CD8-positive, alpha-beta T cell (primary cell): ENCODE measurements at regions of chr5 and their contacts with region 1.

Region 1: DNA sequence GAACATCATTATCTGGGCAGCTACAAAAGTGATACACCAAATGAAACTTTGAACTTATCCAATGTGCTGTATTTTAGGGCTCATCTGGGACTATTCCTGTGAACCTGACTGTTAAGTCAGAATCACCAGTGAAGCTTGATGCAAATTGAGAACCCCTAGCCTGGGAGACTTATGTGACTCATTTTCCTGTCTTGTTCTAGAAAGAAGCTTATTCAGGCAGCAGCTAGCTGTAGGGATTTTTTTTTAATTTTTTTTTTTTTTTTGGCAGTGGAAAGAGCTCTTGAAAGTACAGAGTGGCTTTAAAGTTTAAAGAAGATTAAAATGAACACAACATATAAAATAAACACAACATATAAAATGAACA is 81.1 kb upstream of the TNFAIP8 start:
- DNase-seq: peak in 4 of 9 experiments; percentile 30 to 76 (median 46)
- ATAC-seq: peak; percentile 52
- H3K4me3 ChIP-seq: peak overlapping the region in 1 of 2 experiments; percentile 96
- H3K4me3 Mint-ChIP-seq: peak overlapping the region; percentile 100
- H3K27ac ChIP-seq: peak overlapping the region; percentile 20 to 89
- H3K27ac Mint-ChIP-seq: peak overlapping the region; percentile 97
- H3K4me1 ChIP-seq: peaks cover 85% of the 10 kb centered on the region
- H3K4me1 Mint-ChIP-seq: peaks cover 96% of the 10 kb centered on the region
- H3K27me3 ChIP-seq: no peaks in the 10 kb centered on the region
- H3K27me3 Mint-ChIP-seq: no peaks in the 10 kb centered on the region
- CTCF ChIP-seq: no peak

Region 2: GRCh38 chr5:119070828-119071572 is 203.7 kb before region 1 on chr5 and contains the start of gene DMXL1:
- CTCF ChIA-PET with region 1: interaction called, 3 read pairs
- POLR2A ChIA-PET with region 1: interaction called, 10 read pairs
- intact Hi-C with region 1: loop called in 1 of 2 experiments (anchors 2 kb)
- DNase-seq: peak; percentile 95 to 99 (median 98)
- ATAC-seq: peak; percentile 83
- H3K4me3 ChIP-seq: peak within 1 kb of the TSS; percentile 69 to 79
- H3K4me3 Mint-ChIP-seq: peak within 1 kb of the TSS; percentile 100
- H3K27ac ChIP-seq: peak within 1 kb of the TSS; percentile 92 to 93
- H3K27ac Mint-ChIP-seq: peak within 1 kb of the TSS; percentile 100
- H3K4me1 ChIP-seq: peaks cover 25% of the 10 kb centered on the region
- H3K4me1 Mint-ChIP-seq: peaks cover 42% of the 10 kb centered on the region
- H3K27me3 ChIP-seq: no peaks in the 10 kb centered on the region
- H3K27me3 Mint-ChIP-seq: no peaks in the 10 kb centered on the region
- CTCF ChIP-seq: no peak
- total RNA-seq, gene DMXL1: 28.7 to 32.4 TPM

Region 3: DNA sequence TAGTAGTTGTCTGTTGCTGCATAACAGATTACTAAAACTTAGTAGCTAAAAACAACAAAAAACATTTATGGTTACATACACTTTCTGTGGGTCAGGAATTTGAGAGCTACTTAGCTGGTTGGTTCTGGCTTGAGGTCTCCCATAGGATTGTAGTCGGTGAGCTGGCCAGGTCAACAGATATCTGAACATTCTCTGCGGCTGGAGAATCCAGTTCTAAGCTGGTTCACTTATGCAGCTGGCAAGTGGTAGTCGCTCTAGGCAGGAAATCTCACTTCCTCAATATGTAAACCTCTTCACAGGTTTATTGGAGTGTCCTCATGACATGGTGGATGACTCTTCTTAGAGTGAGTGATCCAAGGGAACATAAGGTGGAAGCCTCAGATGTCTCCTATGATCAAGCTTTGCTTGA is 15.4 kb after region 1 on chr5:
- CTCF ChIA-PET with region 1: interaction called, 4 read pairs
- POLR2A ChIA-PET with region 1: interaction called, 24 read pairs
- intact Hi-C with region 1: loop called (anchors 1 to 2 kb)
- DNase-seq: peak in 2 of 9 experiments; percentile 41 to 68
- ATAC-seq: peak; percentile 27
- H3K4me3 ChIP-seq: peak overlapping the region; percentile 9 to 10
- H3K4me3 Mint-ChIP-seq: peak overlapping the region; percentile 69
- H3K27ac ChIP-seq: peak overlapping the region; percentile 9 to 83
- H3K27ac Mint-ChIP-seq: peak overlapping the region; percentile 97
- H3K4me1 ChIP-seq: peaks cover 75% of the 10 kb centered on the region
- H3K4me1 Mint-ChIP-seq: peaks cover 86% of the 10 kb centered on the region
- H3K27me3 ChIP-seq: no peaks in the 10 kb centered on the region
- H3K27me3 Mint-ChIP-seq: no peaks in the 10 kb centered on the region
- CTCF ChIP-seq: no peak

Region 4: DNA sequence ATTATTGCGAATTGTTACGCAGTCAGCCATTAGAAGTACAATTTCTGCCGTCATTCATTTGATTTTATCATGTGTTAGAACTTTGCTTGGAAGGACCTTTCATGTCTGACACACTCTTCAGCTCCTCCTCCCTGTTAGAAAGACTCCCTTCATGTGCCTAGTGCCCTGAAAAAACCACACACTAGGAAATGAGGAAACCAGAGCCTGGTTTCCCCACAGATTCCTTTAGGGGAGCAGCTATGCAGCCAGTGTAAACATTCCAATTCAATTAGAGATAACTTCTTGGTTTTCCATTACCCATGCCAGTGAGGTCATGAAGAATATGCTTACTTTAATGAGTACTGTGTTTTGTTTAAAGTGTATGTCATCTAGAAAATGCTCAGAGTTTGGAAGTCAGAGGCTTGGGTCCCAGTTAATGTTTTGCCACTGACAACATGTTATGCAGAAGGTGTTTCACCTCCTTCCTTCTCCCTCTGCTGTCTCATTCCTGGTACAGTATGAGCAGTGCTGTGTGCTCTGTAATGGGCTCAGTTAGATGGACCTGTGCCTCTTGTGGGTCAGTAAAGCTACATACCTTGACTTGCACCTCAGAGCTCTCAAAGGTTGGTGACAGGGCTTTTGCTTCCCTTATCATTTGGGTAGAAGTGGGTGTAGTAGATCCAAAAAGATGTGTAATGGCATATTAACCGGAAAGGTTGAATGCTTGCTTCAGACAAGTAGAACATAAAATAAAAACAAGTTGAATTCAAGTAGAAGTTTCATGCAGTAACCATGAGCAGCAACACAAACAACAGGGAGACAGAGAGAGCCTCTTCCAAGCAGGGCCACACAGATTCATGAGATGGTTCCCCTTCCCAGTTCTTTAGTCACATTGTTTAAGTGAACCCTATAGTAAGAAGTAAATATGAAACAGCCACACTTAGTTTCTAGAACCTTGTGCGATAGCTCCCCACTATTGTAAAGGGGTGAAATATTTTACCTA is 28.5 kb after region 1 on chr5:
- CTCF ChIA-PET with region 1: interaction called, 4 read pairs
- POLR2A ChIA-PET with region 1: interaction called, 8 read pairs
- intact Hi-C with region 1: loop called (anchors 2 kb)
- DNase-seq: peak in 1 of 9 experiments; percentile 56
- ATAC-seq: peak; percentile 65
- H3K4me3 ChIP-seq: no peak overlapping the region
- H3K4me3 Mint-ChIP-seq: peak overlapping the region; percentile 64
- H3K27ac ChIP-seq: peak overlapping the region; percentile 1 to 60
- H3K27ac Mint-ChIP-seq: peak overlapping the region; percentile 99
- H3K4me1 ChIP-seq: peaks cover 83% of the 10 kb centered on the region
- H3K4me1 Mint-ChIP-seq: peaks cover 94% of the 10 kb centered on the region
- H3K27me3 ChIP-seq: no peaks in the 10 kb centered on the region
- H3K27me3 Mint-ChIP-seq: no peaks in the 10 kb centered on the region
- CTCF ChIP-seq: no peak

Region 5: GRCh38 chr5:119322948-119323537 is 48.3 kb after region 1 on chr5:
- CTCF ChIA-PET with region 1: no interaction called
- POLR2A ChIA-PET with region 1: no interaction called
- intact Hi-C with region 1: no loop called
- DNase-seq: peak in 1 of 9 experiments; percentile 39
- ATAC-seq: no peak
- H3K4me3 ChIP-seq: no peak overlapping the region
- H3K4me3 Mint-ChIP-seq: peak overlapping the region; percentile 56
- H3K27ac ChIP-seq: peak overlapping the region in 1 of 2 experiments; percentile 42
- H3K27ac Mint-ChIP-seq: peak overlapping the region; percentile 95
- H3K4me1 ChIP-seq: peaks cover 96% of the 10 kb centered on the region
- H3K4me1 Mint-ChIP-seq: peaks cover 94% of the 10 kb centered on the region
- H3K27me3 ChIP-seq: no peaks in the 10 kb centered on the region
- H3K27me3 Mint-ChIP-seq: no peaks in the 10 kb centered on the region
- CTCF ChIP-seq: no peak